Activated T-helper 1 cell treated with anti-CD3 and anti-CD28 coated beads, Interleukin-12 subunit alpha, Interleukin-12 subunit beta, Interleukin-2, Interleukin-4 antibody, amounts not matched to agents 30 ng/mL and 10 ng/mL and 1 ng/mL, durations not matched to agents 14 hours and 24 hours and 36 hours (primary cell): ENCODE measurements at regions of chr10 and their contacts with region 1.

Region 1: DNA sequence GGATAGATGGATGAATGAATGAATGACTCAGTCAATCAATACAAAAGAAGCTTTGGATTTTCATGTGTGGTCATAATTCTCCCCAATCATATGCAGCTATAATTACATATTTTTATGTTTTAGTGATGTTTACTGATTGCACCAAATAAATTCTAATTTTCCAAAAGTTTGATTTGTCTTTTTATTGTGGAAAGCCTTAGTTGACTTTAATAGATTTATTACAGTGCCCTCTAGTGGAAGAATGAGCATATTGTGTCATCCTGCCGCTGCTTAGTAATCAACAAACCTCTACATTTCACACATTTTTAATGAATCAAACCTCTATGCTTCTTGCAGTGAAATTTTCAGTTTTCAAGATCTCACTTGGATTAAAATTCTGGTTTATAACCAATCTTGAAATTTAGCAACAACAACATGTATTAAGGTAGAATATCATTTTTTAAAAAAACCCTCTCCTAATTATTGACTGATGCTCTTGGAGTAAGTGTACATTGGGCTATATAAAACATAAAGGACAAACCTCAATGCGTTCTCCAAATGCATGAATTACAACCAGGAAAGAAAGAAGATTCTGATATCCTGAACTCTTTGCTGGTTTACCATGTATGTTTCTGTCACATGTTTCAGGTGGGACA is 55.6 kb upstream of the PNLIP start:
- DNase-seq: no peak
- H3K4me3 Mint-ChIP-seq: no peak overlapping the region
- H3K27ac Mint-ChIP-seq: no peak overlapping the region
- H3K4me1 Mint-ChIP-seq: no peaks in the 10 kb centered on the region
- H3K27me3 Mint-ChIP-seq: no peaks in the 10 kb centered on the region

Region 2: DNA sequence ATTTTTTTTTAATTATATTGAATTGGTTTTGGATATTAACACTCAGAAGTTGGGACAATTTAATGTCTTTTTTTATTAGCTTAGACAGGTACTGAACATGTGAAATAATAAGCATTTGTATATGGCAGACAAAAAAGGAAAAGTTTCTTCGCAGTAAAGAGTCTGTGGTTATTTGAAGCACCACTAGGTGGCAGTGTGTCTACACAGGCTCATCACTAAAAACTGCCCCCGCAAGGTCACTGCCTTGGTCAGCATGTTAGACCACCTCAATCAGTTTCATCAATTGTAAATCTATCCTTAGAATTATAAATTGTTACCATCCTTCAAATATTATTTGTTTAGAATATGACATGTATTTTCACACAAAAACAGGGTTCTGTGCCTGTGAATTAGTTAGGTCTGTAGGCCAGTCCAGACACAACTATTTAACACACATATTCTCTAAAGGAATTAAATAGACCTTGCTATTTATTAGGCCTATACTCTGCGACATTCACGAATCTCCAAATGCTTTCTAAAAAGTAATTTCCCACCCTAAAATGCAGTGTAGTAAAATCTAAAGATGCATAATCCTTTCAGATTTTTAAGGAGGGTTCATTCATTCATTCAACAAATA is 45.5 kb before region 1 on chr10:
- intact Hi-C with region 1: loop called (anchors 2 kb)
- DNase-seq: no peak
- H3K4me3 Mint-ChIP-seq: no peak overlapping the region
- H3K27ac Mint-ChIP-seq: no peak overlapping the region
- H3K4me1 Mint-ChIP-seq: no peaks in the 10 kb centered on the region
- H3K27me3 Mint-ChIP-seq: no peaks in the 10 kb centered on the region

Region 3: DNA sequence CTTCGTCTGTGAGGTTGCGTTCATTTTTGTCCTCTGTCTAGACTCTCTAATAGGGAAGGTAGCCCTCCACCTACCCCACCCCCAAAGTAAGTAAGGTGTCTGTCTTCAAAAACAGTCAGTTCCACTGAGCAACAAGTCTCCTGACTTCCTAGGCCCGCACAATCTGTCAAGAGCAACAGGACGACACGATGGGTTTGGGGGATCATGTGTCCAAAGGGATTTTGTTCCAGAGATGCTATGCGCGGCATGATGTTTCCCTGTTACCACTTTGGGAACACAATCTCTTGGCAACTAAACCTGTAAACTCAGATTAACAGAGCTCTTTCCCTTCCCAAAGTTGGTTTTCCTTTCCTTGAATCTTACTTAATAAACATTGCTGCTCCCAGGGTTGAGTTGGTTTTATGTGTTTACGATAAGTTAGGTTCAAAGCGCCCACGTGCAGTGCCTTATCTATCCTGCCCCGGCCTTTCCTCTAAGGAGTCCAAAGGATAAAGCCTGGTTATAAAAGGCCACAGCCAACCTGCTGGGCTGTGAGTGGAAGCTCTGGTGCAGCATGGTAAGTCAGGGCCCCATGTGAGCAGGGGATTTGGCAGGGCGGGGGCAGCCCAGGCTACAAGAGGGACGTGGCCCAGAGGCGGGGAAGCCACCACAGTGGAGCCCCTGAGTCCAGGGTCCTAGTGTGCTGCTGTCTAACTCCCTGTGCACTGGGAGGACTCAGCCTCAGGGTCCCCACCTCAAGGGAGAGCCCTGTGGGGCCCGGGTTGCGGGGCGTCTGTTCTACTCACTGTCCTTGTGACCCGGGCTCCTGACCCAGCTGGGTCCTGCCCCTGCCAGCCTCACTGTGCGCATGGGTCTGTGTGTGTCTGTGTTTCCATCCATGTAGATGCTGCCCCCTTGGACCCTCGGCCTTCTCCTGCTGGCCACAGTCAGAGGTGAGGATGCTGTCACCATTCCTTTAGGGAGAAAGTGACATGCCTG is 130.6 kb after region 1 on chr10 and contains the start of gene PNLIPRP2:
- intact Hi-C with region 1: no loop called
- DNase-seq: no peak
- H3K4me3 Mint-ChIP-seq: no peak within 1 kb of the TSS
- H3K27ac Mint-ChIP-seq: no peak within 1 kb of the TSS
- H3K4me1 Mint-ChIP-seq: no peaks in the 10 kb centered on the region
- H3K27me3 Mint-ChIP-seq: peaks cover 2% of the 10 kb centered on the region
- total RNA-seq, gene PNLIPRP2: not detected in 2 replicates

Region 4: DNA sequence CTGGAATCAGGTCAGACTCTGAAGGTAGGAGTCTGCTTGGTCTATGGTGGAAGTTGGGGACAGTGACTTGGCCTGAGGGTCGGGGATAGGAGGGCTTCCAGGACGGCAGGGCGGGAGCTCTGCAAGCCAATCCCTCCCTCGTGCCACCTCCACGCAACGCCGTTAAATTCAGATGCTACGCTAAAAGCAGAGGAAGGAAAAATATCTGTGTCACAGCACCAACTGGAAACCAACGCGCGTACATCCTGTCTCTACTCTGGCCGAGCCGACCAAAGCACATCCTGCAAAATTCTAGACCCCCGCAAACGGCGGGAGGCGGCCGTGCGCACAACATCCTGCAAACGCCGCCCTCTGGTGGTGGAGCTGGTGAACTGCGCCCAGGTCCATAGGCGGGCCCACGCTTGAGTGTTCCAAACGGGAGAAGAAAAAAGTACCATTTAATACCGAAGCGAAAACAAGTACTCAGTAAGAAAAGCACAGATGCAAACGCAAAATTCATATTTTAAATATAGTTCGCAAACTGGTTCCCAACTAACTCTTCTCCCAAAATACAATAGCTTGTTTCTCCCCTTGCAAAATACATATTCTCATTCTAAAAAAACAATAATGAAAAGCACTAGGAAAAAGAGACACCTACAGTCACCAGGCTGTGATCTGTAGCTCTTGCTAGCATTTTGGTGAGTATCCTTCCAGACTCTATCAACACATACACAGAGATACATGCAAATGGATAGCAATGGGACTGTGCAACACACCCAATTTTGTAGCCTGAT is 297.9 kb after region 1 on chr10:
- intact Hi-C with region 1: no loop called
- DNase-seq: peak; percentile 61
- H3K4me3 Mint-ChIP-seq: peak overlapping the region; percentile 47
- H3K27ac Mint-ChIP-seq: peak overlapping the region; percentile 52
- H3K4me1 Mint-ChIP-seq: peaks cover 17% of the 10 kb centered on the region
- H3K27me3 Mint-ChIP-seq: peaks cover 11% of the 10 kb centered on the region